PC-3 (cell line): ENCODE measurements at regions of chr12 and their contacts with region 1.

Region 1: DNA sequence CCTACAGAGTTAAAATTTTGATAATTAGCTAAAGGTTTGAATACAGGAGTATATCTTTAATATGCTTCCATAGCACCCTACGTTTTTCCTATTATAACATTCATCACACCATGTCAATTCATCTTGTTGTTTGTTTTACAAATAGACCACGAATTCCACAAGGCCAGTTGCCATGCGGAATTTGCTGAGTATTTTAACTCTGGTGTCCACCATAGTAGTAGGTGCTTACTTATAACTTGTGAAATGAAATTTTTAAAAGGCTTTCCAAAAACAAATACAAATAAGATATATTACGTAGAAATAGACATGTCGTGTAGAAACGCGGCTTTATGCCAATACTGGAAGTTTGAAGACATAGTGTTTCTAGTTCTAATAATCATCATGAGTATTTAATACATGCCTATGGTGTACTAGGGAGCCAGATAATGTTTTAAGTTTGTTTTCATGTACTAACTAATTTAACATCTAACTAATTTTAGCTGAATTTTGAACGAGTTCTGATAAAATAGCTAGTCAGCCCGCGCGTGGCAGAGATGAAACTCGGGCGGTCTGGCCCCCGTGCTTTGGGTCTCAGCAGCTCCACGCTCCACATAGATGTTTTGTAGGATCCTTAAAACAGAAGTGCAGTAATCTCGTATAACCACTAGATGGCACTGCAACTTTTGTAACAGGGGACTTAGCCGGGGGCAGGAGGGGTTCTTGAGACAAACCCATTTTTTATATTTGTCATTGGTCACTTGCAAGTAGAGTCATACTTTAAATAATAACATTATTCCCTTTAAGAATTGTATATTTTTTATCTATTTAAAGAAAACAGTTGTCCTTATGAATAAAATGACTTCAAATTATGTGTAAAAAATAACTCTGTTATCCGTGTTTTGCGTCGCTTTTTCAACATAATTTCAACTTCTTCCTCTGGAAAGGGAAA is 10.2 kb downstream of the CD69 start:
- DNase-seq: peak; percentile 77
- ATAC-seq: peak; percentile 71
- H3K4me3 ChIP-seq: peak overlapping the region; percentile 35; the same call in 1 of the 2 replicates
- H3K27ac ChIP-seq: no peak overlapping the region
- H3K4me1 ChIP-seq: no peaks in the 10 kb centered on the region
- H3K27me3 ChIP-seq: peaks cover 4% of the 10 kb centered on the region; the same call in 1 of the 2 replicates
- CTCF ChIP-seq: peak; percentile 61

Region 2: GRCh38 chr12:9797722-9798619 is 47.4 kb after region 1 on chr12:
- CTCF ChIA-PET with region 1: interaction called, 15 read pairs
- POLR2A ChIA-PET with region 1: no interaction called
- intact Hi-C with region 1: loop called (anchors 1 kb)
- DNase-seq: peak; percentile 78
- ATAC-seq: peak; percentile 94
- H3K4me3 ChIP-seq: no peak overlapping the region
- H3K27ac ChIP-seq: no peak overlapping the region
- H3K4me1 ChIP-seq: peaks cover 31% of the 10 kb centered on the region
- H3K27me3 ChIP-seq: no peaks in the 10 kb centered on the region
- CTCF ChIP-seq: peak; percentile 70

Region 3: DNA sequence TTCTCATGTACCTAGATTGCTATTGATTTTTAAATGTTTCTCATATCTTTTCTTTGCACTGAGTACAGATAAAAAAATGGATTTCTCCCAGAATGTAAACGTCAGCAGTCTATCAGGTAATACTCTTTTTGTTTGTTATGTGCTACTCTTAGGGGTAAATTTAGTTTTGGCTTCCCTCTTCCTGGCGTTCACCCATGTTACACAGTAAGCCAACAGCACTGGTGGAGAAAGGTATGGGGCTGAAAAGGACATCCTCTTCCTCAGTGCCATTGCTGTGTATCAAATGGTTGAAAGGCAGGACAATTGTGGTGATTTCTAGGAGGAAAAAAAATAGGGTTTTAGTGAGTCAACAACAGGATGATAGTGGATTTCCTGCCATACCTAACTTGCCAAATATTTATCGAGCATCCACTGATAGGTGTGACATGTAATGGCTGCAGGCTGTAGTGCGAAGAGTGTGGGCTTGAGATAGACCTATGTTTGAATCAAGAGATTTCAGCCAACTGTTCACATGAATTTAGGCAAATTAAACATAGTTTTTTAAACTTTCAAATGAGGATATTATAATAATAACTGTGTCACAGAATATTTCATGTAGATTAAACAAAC is 138.2 kb after region 1 on chr12:
- CTCF ChIA-PET with region 1: no interaction called
- POLR2A ChIA-PET with region 1: no interaction called
- intact Hi-C with region 1: no loop called
- DNase-seq: no peak
- ATAC-seq: no peak; the same call in 1 of the 2 replicates
- H3K4me3 ChIP-seq: no peak overlapping the region
- H3K27ac ChIP-seq: no peak overlapping the region
- H3K4me1 ChIP-seq: no peaks in the 10 kb centered on the region; the same call in 1 of the 2 replicates
- H3K27me3 ChIP-seq: 0 out of 2 replicates have a peak, but pooled peaks cover 3% of the 10 kb centered on the region
- CTCF ChIP-seq: no peak

Region 4: DNA sequence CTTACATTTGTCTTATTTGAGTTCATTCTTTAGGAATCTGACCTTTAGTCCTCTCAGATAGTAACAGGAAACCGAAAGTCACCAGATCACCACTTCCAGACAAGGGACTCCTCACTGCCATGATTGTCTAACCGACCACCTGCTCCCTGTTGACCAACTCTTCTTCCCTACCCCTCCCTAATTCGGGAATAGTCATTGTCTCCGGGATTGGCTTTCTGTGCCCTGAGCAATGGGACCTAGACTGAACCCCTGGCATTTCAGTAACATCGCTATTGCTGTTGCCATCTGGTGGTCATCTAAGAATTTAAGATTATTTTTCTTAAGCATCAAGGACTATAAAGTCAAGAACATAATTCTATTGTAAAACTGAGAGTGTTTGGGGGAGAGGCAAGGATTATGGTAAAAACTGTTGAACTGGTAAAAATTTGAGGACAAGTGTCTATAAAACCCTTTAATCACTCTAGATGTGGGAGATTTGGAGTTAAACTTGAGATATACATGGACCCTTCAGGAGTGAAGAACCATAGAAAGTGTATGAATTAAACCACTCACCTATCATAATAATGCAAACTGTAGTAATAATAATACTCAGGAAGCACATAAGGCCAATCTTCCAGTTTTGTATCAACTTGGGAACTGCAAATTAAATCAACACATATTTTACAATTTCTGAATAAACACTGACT is 175.3 kb after region 1 on chr12:
- CTCF ChIA-PET with region 1: no interaction called
- POLR2A ChIA-PET with region 1: no interaction called
- intact Hi-C with region 1: loop called (anchors 1 kb)
- DNase-seq: peak; percentile 57
- ATAC-seq: peak; percentile 40; the same call in 1 of the 2 replicates
- H3K4me3 ChIP-seq: no peak overlapping the region
- H3K27ac ChIP-seq: no peak overlapping the region
- H3K4me1 ChIP-seq: no peaks in the 10 kb centered on the region
- H3K27me3 ChIP-seq: no peaks in the 10 kb centered on the region
- CTCF ChIP-seq: peak; percentile 63

Region 5: GRCh38 chr12:10140001-10140400 is 389.5 kb after region 1 on chr12:
- CTCF ChIA-PET with region 1: no interaction called
- POLR2A ChIA-PET with region 1: no interaction called
- intact Hi-C with region 1: loop called (anchors 2 kb)
- DNase-seq: peak; percentile 63
- ATAC-seq: peak; percentile 46
- H3K4me3 ChIP-seq: no peak overlapping the region
- H3K27ac ChIP-seq: no peak overlapping the region
- H3K4me1 ChIP-seq: no peaks in the 10 kb centered on the region
- H3K27me3 ChIP-seq: no peaks in the 10 kb centered on the region
- CTCF ChIP-seq: peak; percentile 71